B cell (primary cell): ENCODE measurements at regions of chr17 and their contacts with region 1.

Region 1: GRCh38 chr17:8189711-8190477 is at the start of gene BORCS6:
- DNase-seq: peak; percentile 97
- ATAC-seq: peak; percentile 64
- H3K4me3 ChIP-seq: peak within 1 kb of the TSS; percentile 27 to 97 (median 74)
- H3K4me3 Mint-ChIP-seq: no peak within 1 kb of the TSS
- H3K27ac ChIP-seq: peak within 1 kb of the TSS; percentile 89 to 93
- H3K27ac Mint-ChIP-seq: no peak within 1 kb of the TSS
- H3K4me1 ChIP-seq: peaks cover 36 to 53% of the 10 kb centered on the region in 2 donors
- H3K4me1 Mint-ChIP-seq: peaks cover 11% of the 10 kb centered on the region
- H3K27me3 ChIP-seq: no peaks in the 10 kb centered on the region
- H3K27me3 Mint-ChIP-seq: no peaks in the 10 kb centered on the region
- CTCF ChIP-seq: no peak
- total RNA-seq, gene BORCS6: 18.6 and 20.2 TPM in 2 replicates

Region 2: DNA sequence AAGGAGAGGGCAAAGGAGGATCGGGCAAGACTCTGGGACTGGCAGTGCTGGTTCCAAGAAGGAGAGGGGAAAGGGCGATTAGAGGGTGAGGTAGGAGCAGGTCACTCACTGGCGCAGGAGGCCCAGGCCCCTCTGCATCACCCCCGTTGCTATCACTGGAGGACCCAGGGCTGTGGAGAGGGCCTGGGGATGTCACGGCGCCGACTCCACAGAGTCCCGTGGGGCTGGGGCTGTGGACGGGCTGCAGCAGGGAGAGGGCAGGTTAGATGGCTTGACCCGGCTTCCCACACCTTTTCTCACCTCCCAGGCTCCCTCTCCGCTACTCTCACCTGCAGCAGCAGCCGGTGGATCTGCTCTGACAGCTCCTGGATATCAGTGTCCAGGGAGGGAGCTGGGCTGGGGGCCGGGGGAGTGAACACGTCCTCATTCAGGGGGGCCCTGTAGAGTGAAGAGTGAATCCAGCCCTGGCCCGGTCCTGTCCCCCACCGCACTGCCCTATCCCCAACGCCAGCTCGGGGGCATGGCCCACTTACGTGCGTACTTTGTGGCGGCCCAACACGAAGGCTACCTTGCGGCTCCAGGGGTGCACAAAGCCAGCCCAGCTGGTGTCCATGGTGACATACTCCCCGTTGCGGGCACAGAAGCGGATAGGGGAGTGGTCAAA is 42.6 kb before region 1 on chr17:
- CTCF ChIA-PET with region 1: no interaction called
- POLR2A ChIA-PET with region 1: no interaction called
- intact Hi-C with region 1: no loop called
- DNase-seq: peak; percentile 35
- ATAC-seq: no peak
- H3K4me3 ChIP-seq: no peak overlapping the region
- H3K4me3 Mint-ChIP-seq: no peak overlapping the region
- H3K27ac ChIP-seq: no peak overlapping the region
- H3K27ac Mint-ChIP-seq: no peak overlapping the region
- H3K4me1 ChIP-seq: peaks cover 17 to 26% of the 10 kb centered on the region in 2 donors
- H3K4me1 Mint-ChIP-seq: peaks cover 23% of the 10 kb centered on the region
- H3K27me3 ChIP-seq: no peaks in the 10 kb centered on the region
- H3K27me3 Mint-ChIP-seq: no peaks in the 10 kb centered on the region
- CTCF ChIP-seq: no peak

Region 3: DNA sequence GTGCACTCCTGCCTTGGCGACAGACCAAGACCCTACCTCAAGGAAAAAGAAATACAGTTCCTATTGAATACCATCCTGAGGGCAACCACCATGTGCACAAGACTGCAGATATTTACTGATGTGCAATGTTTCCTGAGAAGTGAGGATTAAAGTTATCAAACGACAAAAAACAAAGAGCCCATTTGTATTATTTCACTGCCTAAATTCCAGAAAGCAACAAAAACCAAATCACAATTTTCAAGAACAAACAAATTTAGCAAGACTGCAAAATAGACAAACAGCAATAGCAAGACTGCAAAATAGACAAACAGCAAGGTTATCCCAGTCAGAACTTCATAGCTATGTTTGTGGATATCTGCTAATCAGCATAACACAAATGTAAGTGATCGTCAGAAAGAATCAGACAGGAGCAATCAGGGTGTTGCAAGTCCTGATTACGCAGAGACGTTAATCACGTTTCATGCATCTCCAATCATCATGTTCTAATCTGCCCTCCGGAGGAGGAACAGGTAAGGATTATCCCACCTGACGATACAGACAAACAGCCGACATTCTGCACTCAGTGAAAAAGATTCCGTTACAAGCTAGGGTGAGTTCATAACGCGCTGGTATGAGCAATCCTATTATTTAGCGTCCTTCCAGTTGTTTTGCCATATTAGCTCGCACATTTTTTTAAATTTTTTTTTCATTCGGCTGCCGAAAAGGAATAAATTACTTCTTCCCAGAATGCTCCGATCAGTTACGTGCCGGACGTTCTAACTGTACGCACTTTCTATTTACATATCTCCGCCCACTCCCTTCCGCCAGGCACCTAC is 16.6 kb before region 1 on chr17:
- CTCF ChIA-PET with region 1: interaction called, 12 read pairs
- POLR2A ChIA-PET with region 1: interaction called, 33 read pairs
- intact Hi-C with region 1: loop called (anchors 1 kb)
- DNase-seq: peak; percentile 95
- ATAC-seq: peak; percentile 83
- H3K4me3 ChIP-seq: peak overlapping the region; percentile 32 to 96 (median 63)
- H3K4me3 Mint-ChIP-seq: peak overlapping the region; percentile 94
- H3K27ac ChIP-seq: peak overlapping the region; percentile 95 to 99
- H3K27ac Mint-ChIP-seq: peak overlapping the region; percentile 100
- H3K4me1 ChIP-seq: peaks cover 24 to 38% of the 10 kb centered on the region in 2 donors
- H3K4me1 Mint-ChIP-seq: peaks cover 46% of the 10 kb centered on the region
- H3K27me3 ChIP-seq: no peaks in the 10 kb centered on the region
- H3K27me3 Mint-ChIP-seq: no peaks in the 10 kb centered on the region
- CTCF ChIP-seq: no peak

Region 4: GRCh38 chr17:8204761-8205555 is 15.1 kb after region 1 on chr17:
- CTCF ChIA-PET with region 1: interaction called, 17 read pairs
- POLR2A ChIA-PET with region 1: interaction called, 9 read pairs
- intact Hi-C with region 1: loop called (anchors 1 kb)
- DNase-seq: no peak
- ATAC-seq: no peak
- H3K4me3 ChIP-seq: no peak overlapping the region
- H3K4me3 Mint-ChIP-seq: no peak overlapping the region
- H3K27ac ChIP-seq: no peak overlapping the region
- H3K27ac Mint-ChIP-seq: no peak overlapping the region
- H3K4me1 ChIP-seq: peaks cover 2 to 16% of the 10 kb centered on the region in 2 donors
- H3K4me1 Mint-ChIP-seq: peaks cover 7% of the 10 kb centered on the region
- H3K27me3 ChIP-seq: no peaks in the 10 kb centered on the region
- H3K27me3 Mint-ChIP-seq: no peaks in the 10 kb centered on the region
- CTCF ChIP-seq: no peak

Region 5: DNA sequence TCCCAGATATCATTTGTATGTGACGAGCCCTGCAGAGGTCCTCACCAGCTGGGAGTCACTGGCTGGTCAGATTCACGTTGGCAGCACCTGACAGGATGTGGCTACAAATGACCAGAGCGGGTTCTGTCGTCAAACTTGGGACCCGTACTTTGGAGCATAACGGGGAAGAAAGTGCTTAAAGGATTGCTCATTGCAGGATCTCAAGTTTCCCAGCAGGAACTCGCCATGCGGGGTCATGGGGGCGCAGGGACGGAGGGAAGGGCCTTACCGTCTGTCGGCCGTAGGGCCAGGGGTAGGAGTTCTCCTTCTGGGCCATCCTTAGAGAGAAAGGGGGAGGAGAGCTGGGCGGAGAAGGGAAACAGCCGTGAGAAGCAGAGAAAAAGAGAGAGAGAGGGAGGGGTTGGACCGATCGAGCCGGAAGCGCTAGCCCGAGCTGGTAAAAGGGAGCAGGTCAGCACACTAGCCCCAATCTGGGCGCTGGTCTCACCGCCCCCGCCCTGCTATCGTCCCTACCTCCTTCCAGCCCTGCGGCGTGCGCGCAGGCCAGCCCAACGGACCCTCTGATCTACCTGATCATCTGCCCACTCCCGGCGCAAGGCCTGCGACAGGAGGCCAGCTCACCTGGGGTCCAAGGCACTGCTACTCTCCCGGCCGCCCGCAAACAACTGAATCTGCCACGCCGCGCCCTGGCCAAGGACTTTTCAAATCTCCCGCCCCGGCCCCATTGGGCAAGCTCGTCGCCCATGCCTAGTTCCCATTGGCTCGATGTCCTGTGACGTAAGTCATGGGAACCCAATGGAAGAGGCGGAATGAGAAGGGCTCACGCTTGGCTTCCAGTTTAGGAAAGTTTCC is 20.2 kb after region 1 on chr17 and contains the start of gene AURKB:
- CTCF ChIA-PET with region 1: interaction called, 6 read pairs
- POLR2A ChIA-PET with region 1: interaction called, 6 read pairs
- intact Hi-C with region 1: loop called (anchors 1 kb)
- DNase-seq: peak; percentile 94
- ATAC-seq: peak; percentile 100
- H3K4me3 ChIP-seq: peak within 1 kb of the TSS; percentile 65 to 95 (median 76)
- H3K4me3 Mint-ChIP-seq: peak within 1 kb of the TSS; percentile 86
- H3K27ac ChIP-seq: peak within 1 kb of the TSS; percentile 59 to 66
- H3K27ac Mint-ChIP-seq: peak within 1 kb of the TSS; percentile 39
- H3K4me1 ChIP-seq: peaks cover 9 to 22% of the 10 kb centered on the region in 2 donors
- H3K4me1 Mint-ChIP-seq: peaks cover 15% of the 10 kb centered on the region
- H3K27me3 ChIP-seq: no peaks in the 10 kb centered on the region
- H3K27me3 Mint-ChIP-seq: no peaks in the 10 kb centered on the region
- CTCF ChIP-seq: no peak
- total RNA-seq, gene AURKB: 0.41 and 1.1 TPM in 2 replicates

Region 6: DNA sequence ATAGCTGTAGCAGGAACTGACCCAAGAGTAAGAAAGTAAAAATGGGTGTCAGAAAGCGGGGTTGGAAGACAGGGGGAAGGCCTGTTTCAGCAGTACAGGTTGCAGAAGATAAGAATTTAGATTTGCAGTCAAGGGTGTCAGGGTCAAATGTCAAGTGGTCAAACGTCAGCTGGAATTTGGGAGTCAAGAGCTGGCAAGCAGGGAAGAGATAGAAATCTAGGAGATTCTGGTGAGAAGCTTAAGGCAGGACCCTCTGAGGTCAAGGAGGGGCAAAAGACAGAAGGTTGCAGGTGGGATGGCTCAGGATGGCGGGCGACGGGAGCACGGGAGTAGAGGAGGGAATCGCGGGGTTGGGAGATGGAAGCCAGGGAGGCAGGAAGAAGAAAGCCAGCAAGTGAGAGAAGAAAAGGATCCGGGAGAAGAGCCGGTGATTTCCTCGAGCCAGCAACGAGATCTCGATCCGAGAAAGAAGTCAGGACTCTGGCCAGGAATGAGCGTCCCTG is 105.0 kb after region 1 on chr17:
- CTCF ChIA-PET with region 1: interaction called, 7 read pairs
- POLR2A ChIA-PET with region 1: interaction called, 13 read pairs
- intact Hi-C with region 1: loop called (anchors 1 kb)
- DNase-seq: no peak
- ATAC-seq: no peak
- H3K4me3 ChIP-seq: peak overlapping the region; percentile 41 to 93 (median 89)
- H3K4me3 Mint-ChIP-seq: peak overlapping the region; percentile 94
- H3K27ac ChIP-seq: peak overlapping the region; percentile 78
- H3K27ac Mint-ChIP-seq: peak overlapping the region; percentile 95
- H3K4me1 ChIP-seq: peaks cover 5 to 21% of the 10 kb centered on the region in 2 donors
- H3K4me1 Mint-ChIP-seq: peaks cover 32% of the 10 kb centered on the region
- H3K27me3 ChIP-seq: no peaks in the 10 kb centered on the region
- H3K27me3 Mint-ChIP-seq: no peaks in the 10 kb centered on the region
- CTCF ChIP-seq: no peak

Region 7: DNA sequence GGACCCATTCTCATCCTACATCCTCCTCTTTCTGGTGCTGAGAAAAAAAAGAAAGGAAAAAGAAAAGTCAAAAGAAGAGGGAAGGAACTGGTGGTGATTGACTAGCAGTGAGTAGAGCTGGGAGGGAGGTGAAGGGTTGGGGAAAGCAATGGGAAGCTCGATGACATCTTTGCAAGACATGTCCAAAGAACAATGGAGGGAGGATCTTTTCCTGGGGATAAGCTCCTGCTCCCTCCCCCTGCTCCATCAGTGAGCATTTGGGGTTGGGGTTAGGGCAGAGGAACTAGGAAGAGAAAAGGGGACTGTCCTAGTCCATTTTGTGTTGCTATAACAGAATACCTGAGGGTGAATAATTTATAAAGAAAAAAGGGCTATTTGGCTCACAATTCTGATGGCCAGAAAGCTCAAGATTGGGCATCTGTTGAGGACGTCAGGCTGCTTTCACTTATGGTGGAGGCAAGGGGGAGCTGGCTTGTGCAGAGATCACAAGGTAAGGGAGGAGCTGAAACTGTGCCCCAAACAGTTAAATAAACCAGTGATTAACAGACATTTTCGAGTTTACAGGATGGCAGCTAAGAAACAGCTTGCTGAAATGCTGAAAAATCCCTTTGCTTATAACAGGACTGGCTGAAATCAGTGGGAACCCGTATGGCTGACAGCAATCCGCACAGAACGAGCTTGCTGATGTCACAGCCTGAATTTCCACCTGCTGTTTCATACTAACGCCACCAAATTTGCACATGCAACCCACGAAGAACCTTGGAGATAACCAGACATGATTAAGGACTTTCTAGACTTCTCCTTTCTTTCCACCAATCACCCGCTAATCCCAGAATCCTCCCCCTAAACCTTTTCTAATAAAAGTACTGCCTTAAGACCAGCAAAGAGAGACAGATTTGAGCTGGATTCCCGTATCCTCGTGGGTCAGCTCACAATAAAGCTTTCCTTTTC is 148.2 kb after region 1 on chr17:
- CTCF ChIA-PET with region 1: no interaction called
- POLR2A ChIA-PET with region 1: no interaction called
- intact Hi-C with region 1: no loop called
- DNase-seq: peak; percentile 33
- ATAC-seq: no peak
- H3K4me3 ChIP-seq: no peak overlapping the region
- H3K4me3 Mint-ChIP-seq: peak overlapping the region; percentile 8
- H3K27ac ChIP-seq: no peak overlapping the region
- H3K27ac Mint-ChIP-seq: no peak overlapping the region
- H3K4me1 ChIP-seq: peaks cover 7% of the 10 kb centered on the region in 2 donors
- H3K4me1 Mint-ChIP-seq: peaks cover 11% of the 10 kb centered on the region
- H3K27me3 ChIP-seq: peaks cover 0 to 2% (median 0%) of the 10 kb centered on the region in 4 experiments
- H3K27me3 Mint-ChIP-seq: peaks cover 14% of the 10 kb centered on the region
- CTCF ChIP-seq: no peak

Region 8: GRCh38 chr17:8470447-8471047 is 280.7 kb after region 1 on chr17:
- CTCF ChIA-PET with region 1: no interaction called
- POLR2A ChIA-PET with region 1: no interaction called
- intact Hi-C with region 1: no loop called
- DNase-seq: no peak
- ATAC-seq: no peak
- H3K4me3 ChIP-seq: no peak overlapping the region
- H3K4me3 Mint-ChIP-seq: no peak overlapping the region
- H3K27ac ChIP-seq: no peak overlapping the region
- H3K27ac Mint-ChIP-seq: no peak overlapping the region
- H3K4me1 ChIP-seq: no peaks in the 10 kb centered on the region
- H3K4me1 Mint-ChIP-seq: no peaks in the 10 kb centered on the region
- H3K27me3 ChIP-seq: no peaks in the 10 kb centered on the region
- H3K27me3 Mint-ChIP-seq: no peaks in the 10 kb centered on the region
- CTCF ChIP-seq: no peak